Activated CD8-positive, alpha-beta T cell treated with anti-CD3 and anti-CD28 coated beads, Interleukin-2, amount 10 ng/mL, durations not matched to agents 7 days and 5 days (primary cell): ENCODE measurements at regions of chr11 and their contacts with region 1.

Region 1: DNA sequence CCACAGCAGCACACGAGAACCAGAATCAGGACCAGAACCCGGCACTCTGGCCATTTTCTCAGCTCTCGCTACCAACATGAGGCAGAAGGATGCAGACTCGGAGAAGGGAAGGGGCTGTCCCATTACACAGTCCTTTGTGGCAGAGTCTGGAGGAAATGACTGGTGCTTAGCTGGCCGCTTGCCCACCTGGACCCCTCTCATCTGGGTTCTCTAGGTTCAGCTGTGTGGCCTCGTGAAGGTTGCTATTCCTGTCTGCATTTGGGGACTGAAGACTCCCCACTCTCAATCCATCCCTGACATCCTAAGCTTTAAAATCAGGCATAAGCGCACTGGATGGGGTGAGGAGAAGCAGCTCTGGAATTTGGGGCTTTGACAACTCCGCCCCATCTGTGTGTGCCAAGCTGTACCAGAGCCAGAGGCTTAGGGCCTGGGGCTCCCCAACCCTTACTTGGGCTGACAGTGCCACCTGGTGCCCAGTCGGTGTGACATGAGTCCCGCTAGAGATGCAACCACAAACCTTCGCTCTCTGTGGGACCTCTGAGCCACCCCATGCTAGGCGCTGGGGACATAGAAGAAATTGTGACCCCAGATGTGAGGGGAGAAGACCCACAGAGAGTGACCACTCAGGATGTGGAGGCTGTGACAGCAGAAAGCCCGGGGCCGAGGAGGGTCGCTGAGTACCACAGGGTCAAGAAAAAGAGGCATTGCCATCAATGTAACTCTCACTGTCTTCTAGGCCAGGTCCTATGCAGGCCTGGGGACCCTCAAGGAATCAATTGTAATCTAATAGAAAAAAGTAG is 35.9 kb upstream of the FCHSD2 start:
- DNase-seq: peak; percentile 88
- ATAC-seq: peak; percentile 99
- H3K4me3 Mint-ChIP-seq: no peak overlapping the region
- H3K27ac Mint-ChIP-seq: peak overlapping the region; percentile 64
- H3K4me1 Mint-ChIP-seq: peaks cover 33% of the 10 kb centered on the region
- H3K27me3 Mint-ChIP-seq: peaks cover 22% of the 10 kb centered on the region

Region 2: DNA sequence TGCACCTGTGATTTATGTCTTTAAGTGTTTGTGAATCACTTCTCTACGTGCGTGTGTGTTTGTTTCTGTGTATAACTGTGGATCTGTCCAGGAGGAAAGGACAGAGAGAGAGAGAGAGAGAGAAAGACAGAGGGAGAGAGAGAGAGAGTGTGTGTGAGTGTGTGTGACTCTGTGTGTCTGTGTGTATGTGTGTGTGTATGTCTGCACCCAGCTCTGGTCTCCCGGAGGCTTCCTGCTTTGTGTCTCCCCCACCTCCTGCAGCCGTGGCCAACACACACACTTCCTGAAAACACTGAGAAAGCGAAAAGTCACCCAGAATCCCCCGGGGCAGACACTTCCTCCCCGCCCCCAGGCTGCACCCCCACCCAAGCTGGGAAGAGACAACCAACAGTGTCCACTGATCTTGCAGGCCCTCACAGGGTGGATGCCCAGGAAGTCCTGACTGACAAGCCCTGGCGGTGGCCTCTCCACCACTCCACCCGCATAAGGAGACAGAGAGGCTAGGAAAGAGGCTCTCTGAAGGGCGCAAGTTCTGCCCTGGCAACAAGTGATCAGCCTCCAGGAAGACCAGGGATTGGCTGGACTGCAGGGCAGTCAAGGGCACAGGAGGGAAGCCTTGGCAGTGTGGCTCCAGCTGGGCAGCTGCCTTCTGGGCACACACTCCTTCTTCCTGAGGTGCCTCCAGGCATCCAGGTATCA is 455.8 kb before region 1 on chr11:
- CTCF ChIA-PET with region 1: interaction called, 24 read pairs
- POLR2A ChIA-PET with region 1: interaction called, 3 read pairs
- DNase-seq: peak; percentile 91
- ATAC-seq: peak; percentile 91
- H3K4me3 Mint-ChIP-seq: peak overlapping the region; percentile 85
- H3K27ac Mint-ChIP-seq: peak overlapping the region; percentile 90
- H3K4me1 Mint-ChIP-seq: peaks cover 58% of the 10 kb centered on the region
- H3K27me3 Mint-ChIP-seq: no peaks in the 10 kb centered on the region

Region 3: DNA sequence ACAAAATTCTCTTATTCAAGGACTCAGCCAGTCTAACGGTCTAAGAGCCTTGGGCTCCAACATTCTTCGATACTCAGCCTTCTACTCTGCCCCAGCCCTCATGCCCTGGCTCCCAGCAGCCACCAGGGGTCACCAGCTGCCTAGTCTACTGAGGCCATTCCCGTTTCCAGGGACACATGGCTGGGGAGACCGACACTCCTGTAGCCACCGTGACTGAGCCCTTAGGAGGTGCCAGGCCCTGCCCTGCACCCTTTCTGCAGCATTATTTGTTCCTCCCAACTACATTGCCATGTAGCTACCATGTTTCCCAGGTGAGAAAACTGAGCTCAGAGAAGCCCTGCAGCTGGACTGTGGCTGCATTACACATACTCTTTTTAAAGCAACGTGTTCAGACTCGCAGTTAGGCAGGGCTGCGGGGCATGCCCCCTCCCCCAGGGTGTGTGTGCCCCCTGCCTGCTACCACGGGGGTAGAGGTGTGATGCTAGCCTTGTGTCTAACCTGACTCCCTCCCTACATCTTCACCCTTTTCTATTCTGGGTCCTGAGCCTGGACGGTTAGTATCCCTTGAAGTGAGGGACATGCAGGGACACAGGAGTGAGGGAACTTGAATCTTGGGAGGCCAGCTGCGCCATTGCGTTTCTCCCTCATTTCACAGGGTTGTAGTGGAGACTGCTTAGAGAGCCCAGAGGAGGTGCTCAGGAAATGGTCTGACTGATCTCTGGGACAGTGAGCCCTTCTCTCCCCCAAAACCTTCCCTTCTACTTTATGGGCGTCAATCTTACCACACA is 346.3 kb before region 1 on chr11:
- CTCF ChIA-PET with region 1: interaction called, 54 read pairs
- POLR2A ChIA-PET with region 1: interaction called, 12 read pairs
- DNase-seq: peak; percentile 48
- ATAC-seq: peak; percentile 66
- H3K4me3 Mint-ChIP-seq: no peak overlapping the region
- H3K27ac Mint-ChIP-seq: no peak overlapping the region
- H3K4me1 Mint-ChIP-seq: peaks cover 40% of the 10 kb centered on the region
- H3K27me3 Mint-ChIP-seq: no peaks in the 10 kb centered on the region

Region 4: GRCh38 chr11:72918851-72919250 is 259.1 kb before region 1 on chr11:
- CTCF ChIA-PET with region 1: interaction called, 91 read pairs
- POLR2A ChIA-PET with region 1: no interaction called
- DNase-seq: no peak
- ATAC-seq: no peak
- H3K4me3 Mint-ChIP-seq: no peak overlapping the region
- H3K27ac Mint-ChIP-seq: no peak overlapping the region
- H3K4me1 Mint-ChIP-seq: no peaks in the 10 kb centered on the region
- H3K27me3 Mint-ChIP-seq: no peaks in the 10 kb centered on the region

Region 5: DNA sequence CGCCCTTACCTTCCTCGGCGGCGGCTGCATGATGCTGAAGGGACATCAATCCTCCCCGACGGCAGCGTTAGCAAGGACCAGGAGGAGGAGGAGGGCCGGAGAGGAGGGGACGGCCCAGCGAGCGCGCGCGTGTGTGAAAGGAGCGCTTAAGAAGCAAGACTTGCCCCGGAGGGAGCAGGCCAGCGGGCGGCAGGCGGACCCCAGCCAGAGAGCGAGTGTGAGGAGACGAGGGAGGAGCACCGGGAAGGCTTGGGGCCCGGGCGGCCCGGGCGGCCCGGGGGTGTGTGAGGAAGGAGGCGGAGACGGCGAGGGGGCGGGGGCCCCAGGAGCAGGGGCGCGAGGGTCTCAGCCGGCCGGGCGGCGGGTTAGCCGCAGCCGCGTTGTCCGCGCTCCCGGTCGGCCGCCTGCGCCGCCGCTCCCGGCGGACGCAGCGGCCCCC is 36.1 kb before region 1 on chr11:
- CTCF ChIA-PET with region 1: interaction called, 124 read pairs
- POLR2A ChIA-PET with region 1: interaction called, 29 read pairs
- DNase-seq: peak; percentile 71
- ATAC-seq: peak; percentile 52
- H3K4me3 Mint-ChIP-seq: peak overlapping the region; percentile 92
- H3K27ac Mint-ChIP-seq: peak overlapping the region; percentile 94
- H3K4me1 Mint-ChIP-seq: peaks cover 61% of the 10 kb centered on the region
- H3K27me3 Mint-ChIP-seq: no peaks in the 10 kb centered on the region

Region 6: GRCh38 chr11:73157053-73158010 is 20.6 kb before region 1 on chr11:
- CTCF ChIA-PET with region 1: interaction called, 38 read pairs
- POLR2A ChIA-PET with region 1: interaction called, 7 read pairs
- DNase-seq: no peak
- ATAC-seq: no peak
- H3K4me3 Mint-ChIP-seq: no peak overlapping the region
- H3K27ac Mint-ChIP-seq: no peak overlapping the region
- H3K4me1 Mint-ChIP-seq: peaks cover 65% of the 10 kb centered on the region
- H3K27me3 Mint-ChIP-seq: no peaks in the 10 kb centered on the region

Region 7: DNA sequence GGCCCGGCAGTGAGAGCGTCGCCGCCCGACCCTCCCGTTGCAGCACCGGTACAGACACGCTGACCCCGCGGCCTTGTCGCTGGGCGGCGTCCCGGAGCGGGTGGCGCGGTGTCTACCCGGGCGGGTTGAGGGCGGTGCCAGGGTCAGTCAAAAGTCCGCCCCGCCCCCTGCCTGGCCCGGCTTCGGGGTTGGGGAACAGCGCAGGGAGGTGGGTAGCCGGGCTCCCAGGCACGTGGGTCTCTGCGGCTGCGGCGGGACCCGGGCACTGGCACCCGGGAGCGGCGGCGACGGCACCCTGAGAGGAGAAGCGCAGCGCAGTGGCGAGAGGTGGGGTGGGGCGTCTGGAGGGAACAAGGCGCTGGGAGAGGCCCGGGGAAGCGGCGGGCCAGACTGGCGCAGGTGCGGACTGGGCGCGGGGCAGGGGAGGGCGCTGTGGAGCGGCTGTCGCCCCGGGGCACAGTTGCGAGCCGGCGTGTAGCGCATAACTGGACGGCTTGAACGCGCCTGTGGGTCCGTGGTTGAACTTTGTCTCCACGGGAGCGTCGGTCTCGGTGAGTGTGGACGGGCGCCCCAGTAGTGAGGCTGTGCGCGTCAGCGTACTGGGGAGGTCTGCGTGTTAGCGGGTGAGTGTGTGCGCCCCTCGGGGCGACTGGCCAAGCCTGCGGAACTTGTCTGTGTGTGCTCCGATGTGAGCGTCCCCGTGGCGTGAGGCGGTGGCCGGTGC is 40.3 kb after region 1 on chr11 and contains the start of gene P2RY2:
- CTCF ChIA-PET with region 1: no interaction called
- POLR2A ChIA-PET with region 1: no interaction called
- DNase-seq: peak; percentile 43
- ATAC-seq: peak; percentile 78
- H3K4me3 Mint-ChIP-seq: peak within 1 kb of the TSS; percentile 44
- H3K27ac Mint-ChIP-seq: no peak within 1 kb of the TSS
- H3K4me1 Mint-ChIP-seq: peaks cover 3% of the 10 kb centered on the region
- H3K27me3 Mint-ChIP-seq: peaks cover 39% of the 10 kb centered on the region
- total RNA-seq, gene P2RY2: not detected